H1 (cell line): ENCODE measurements at regions of chr16 and their contacts with region 1.

Region 1: DNA sequence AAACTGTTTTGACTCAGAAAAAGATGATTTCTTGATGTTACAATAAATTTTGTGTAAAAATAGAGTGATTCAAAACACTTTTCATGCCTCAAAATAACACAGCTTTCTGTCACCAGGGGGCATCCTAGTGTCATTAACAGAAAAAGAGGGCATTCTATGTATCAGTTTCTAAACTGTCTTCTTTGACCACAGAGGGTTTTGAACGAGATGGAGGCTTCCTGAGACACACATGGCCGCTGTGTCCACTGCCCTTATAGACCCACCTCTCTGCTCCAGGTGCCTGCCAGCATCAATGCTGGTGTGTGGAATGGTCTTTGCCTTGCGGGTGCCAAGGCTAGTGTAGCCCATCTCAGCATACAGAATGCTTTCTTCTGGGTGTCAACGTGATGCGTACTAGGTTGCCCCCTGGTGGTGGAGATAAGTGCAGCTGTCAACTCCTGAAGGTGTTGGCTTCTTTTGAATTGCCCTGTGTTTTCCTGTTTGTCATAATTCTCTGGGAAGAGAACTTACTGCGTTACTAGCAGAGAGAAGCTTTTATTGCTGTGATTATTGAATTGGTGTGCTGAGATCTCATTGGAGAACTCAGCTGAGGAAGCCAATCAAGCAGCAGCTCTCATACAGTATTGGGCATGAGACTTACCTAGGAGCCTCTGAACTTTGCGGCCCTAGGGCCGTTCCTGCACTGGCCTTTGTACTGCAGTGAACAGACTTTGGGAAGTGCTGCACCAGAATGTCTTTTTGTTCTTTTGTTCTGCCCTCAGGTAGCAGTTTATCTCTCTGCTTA is 38.6 kb downstream of the USP10 start:
- DNase-seq: peak in 1 of 2 experiments; percentile 91
- H3K4me3 ChIP-seq: no peak overlapping the region
- H3K27ac ChIP-seq: no peak overlapping the region
- H3K4me1 ChIP-seq: peaks cover 7 to 22% (median 16%) of the 10 kb centered on the region in 4 experiments
- H3K27me3 ChIP-seq: no peaks in the 10 kb centered on the region
- CTCF ChIP-seq: peak; percentile 85 to 91 (median 86)
- EP300 ChIP-seq: no peak
- POLR2A ChIP-seq: no peak
- RAD21 ChIP-seq: peak; percentile 43 to 64

Region 2: GRCh38 chr16:84629580-84629979 is 108.9 kb before region 1 on chr16:
- CTCF ChIA-PET with region 1: interaction called, 68 read pairs
- POLR2A ChIA-PET with region 1: no interaction called
- DNase-seq: no peak
- H3K4me3 ChIP-seq: no peak overlapping the region
- H3K27ac ChIP-seq: no peak overlapping the region
- H3K4me1 ChIP-seq: peaks cover 0 to 6% (median 3%) of the 10 kb centered on the region in 4 experiments; a peak in 3 of 7 replicates
- H3K27me3 ChIP-seq: no peaks in the 10 kb centered on the region
- CTCF ChIP-seq: no peak
- EP300 ChIP-seq: no peak
- POLR2A ChIP-seq: no peak
- RAD21 ChIP-seq: no peak

Region 3: GRCh38 chr16:84663433-84664101 is 74.9 kb before region 1 on chr16:
- CTCF ChIA-PET with region 1: interaction called, 15 read pairs
- POLR2A ChIA-PET with region 1: no interaction called
- DNase-seq: no peak
- H3K4me3 ChIP-seq: no peak overlapping the region
- H3K27ac ChIP-seq: no peak overlapping the region
- H3K4me1 ChIP-seq: peaks cover 1 to 9% (median 6%) of the 10 kb centered on the region in 4 experiments; a peak in 4 of 7 replicates
- H3K27me3 ChIP-seq: no peaks in the 10 kb centered on the region
- CTCF ChIP-seq: no peak
- EP300 ChIP-seq: no peak
- POLR2A ChIP-seq: no peak
- RAD21 ChIP-seq: no peak

Region 4: DNA sequence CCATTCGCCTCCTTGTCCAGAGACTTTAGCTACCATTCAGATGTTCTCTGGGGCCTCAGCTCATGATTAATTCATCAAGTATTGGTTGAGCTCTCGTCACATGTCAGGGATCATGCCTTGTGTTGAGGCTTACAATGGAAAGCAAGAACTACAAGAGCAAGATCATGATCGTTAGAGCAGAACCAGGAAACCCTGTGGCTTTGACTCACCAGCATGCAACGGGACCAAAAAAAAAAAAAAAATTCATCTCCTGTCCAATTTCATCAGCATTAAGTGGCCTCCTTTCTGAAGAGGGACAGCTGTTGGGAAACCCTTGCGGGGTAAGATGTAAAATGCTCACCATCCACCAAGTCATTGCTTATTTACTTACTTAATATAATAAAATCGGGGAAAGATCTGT is 50.7 kb before region 1 on chr16:
- CTCF ChIA-PET with region 1: interaction called, 10 read pairs
- POLR2A ChIA-PET with region 1: interaction called, 4 read pairs
- DNase-seq: no peak
- H3K4me3 ChIP-seq: no peak overlapping the region
- H3K27ac ChIP-seq: no peak overlapping the region
- H3K4me1 ChIP-seq: peaks cover 0 to 12% (median 6%) of the 10 kb centered on the region in 4 experiments; a peak in 5 of 7 replicates
- H3K27me3 ChIP-seq: no peaks in the 10 kb centered on the region; a peak in 1 of 7 replicates
- CTCF ChIP-seq: no peak
- EP300 ChIP-seq: no peak
- POLR2A ChIP-seq: no peak
- RAD21 ChIP-seq: no peak

Region 5: DNA sequence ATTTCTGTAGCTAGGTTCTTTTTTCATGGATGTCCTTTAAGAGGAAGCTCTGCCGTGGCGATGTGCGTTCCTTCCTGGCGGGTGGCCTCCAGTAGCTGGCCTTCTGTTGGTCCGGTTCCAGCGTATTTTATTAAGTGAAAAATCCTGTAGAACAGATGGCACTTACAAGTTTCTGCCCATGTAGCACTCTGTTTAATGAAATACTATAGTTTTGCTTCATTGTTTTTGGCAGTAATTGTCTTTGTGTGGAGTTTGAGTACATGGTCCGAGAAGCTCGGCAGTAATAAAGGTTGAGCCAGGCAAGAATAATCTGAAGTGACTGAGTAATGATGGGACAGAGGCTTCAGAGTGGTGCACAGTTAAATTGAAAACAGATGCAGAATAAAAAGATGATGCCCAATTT is 18.3 kb before region 1 on chr16:
- CTCF ChIA-PET with region 1: interaction called, 120 read pairs
- POLR2A ChIA-PET with region 1: no interaction called
- DNase-seq: peak in 1 of 2 experiments; percentile 22
- H3K4me3 ChIP-seq: no peak overlapping the region
- H3K27ac ChIP-seq: no peak overlapping the region
- H3K4me1 ChIP-seq: peaks cover 0 to 10% (median 4%) of the 10 kb centered on the region in 4 experiments; a peak in 6 of 7 replicates
- H3K27me3 ChIP-seq: no peaks in the 10 kb centered on the region
- CTCF ChIP-seq: no peak
- EP300 ChIP-seq: no peak
- POLR2A ChIP-seq: no peak
- RAD21 ChIP-seq: no peak

Region 6: DNA sequence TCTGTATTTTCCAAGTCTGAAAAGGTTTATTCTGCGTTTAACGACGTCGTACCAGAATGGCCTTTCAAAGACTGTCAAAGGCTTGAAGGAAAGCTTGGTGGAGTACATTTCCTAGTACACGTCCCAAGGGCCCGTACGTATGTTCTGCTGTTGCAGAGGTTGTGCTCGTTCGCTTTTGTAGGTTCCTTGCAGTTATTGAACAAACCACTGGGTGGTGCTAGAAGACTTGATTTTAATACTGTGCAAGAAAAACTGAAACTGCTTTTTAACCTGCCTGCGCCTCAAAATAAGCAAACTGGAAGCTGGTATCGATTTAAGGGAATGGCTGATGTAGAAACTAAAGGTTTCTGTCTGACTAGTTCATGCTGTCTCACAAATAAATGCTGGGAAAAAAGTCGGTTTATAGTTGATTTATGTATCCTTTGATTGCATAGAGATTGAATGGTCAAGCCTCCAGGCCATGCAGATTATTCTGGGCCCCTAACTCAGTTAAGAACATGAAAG is 16.0 kb after region 1 on chr16:
- CTCF ChIA-PET with region 1: interaction called, 137 read pairs
- POLR2A ChIA-PET with region 1: interaction called, 4 read pairs
- DNase-seq: peak; percentile 33 to 76
- H3K4me3 ChIP-seq: no peak overlapping the region
- H3K27ac ChIP-seq: no peak overlapping the region
- H3K4me1 ChIP-seq: no peaks in the 10 kb centered on the region
- H3K27me3 ChIP-seq: no peaks in the 10 kb centered on the region
- CTCF ChIP-seq: peak in 2 of 3 experiments; percentile 73 to 79; a peak in 3 of 4 replicates
- EP300 ChIP-seq: no peak
- POLR2A ChIP-seq: no peak
- RAD21 ChIP-seq: peak; percentile 79 to 82